KBM-7 (cell line): ENCODE measurements at regions of chr22 and their contacts with region 1.

Region 1: DNA sequence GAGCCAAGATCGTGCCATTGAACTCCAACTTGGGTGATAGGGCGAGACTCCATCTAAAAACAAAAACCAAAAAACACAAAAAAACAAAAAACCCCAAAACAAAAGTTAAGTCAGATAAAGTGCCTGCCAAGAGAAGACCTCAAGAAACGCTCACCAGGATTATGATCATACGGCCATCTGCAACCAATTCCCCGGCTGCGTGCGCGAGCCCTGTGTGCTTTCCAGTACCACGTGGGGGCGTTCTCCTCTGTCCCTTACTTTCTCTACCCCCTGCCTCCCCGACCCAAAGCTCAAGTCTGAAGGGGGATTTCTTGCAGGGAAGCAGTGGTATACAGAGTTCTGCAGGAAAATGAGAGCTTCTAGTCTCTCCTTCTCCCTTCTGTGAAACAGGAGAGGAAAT is 10.5 kb upstream of the RPS19BP1 start:
- DNase-seq: peak; percentile 49

Region 2: GRCh38 chr22:40024201-40025061 is 481.3 kb after region 1 on chr22:
- in situ Hi-C with region 1: loop called (anchors 10 kb)
- DNase-seq: peak; percentile 76